PC-9 (cell line): ENCODE measurements at regions of chr19 and their contacts with region 1.

Region 1: DNA sequence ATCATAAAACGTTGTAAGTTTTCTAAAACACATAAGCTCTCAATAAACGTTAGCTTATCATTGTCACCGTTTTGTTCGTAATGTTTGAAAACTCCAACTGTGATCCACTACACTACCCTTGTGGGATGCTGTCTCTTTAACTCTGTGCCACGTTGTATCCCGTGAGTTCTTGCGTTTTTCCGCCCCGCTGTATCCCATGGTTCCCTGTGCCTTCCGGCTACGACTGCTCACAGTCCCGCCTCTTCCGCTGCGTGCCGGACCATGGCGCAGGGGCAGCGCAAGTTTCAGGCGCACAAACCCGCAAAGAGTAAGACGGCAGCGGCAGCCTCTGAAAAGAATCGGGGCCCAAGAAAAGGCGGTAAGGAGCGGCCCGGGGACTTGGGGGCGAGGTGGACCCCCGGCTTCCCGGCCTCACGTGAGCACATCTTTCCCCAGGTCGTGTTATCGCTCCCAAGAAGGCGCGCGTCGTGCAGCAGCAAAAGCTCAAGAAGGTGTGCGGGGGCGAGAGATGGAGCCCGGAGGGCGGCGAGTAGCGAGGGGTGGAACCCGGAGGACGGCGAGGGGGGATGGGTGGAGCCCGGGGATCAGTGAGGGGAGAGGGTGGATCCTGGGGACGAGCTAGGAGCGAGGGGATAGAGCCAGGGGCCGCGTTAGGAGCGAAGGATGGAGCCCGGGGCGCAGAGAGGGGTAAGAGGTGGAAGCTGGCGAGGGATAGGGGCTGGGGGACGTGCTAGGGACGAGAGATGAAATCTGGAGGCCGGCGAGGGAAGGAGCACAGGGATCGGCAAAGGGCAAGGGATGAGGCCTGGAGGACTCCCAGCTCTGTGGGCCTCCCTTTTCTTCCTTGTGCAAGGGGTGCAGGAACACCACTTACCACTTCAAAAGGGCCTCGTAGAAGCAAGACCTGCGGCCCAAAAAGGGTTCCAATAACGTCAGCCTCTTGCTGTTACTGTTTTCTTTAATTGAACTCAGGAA is at the start of gene C19orf53:
- DNase-seq: peak; percentile 82 to 83
- H3K4me3 ChIP-seq: peak within 1 kb of the TSS; percentile 88
- H3K27ac ChIP-seq: peak within 1 kb of the TSS; percentile 44
- H3K4me1 ChIP-seq: peaks cover 6% of the 10 kb centered on the region
- H3K27me3 ChIP-seq: no peaks in the 10 kb centered on the region
- CTCF ChIP-seq: no peak
- total RNA-seq, gene C19orf53: 99.4 and 121 TPM in 2 replicates

Region 2: GRCh38 chr19:13756210-13756609 is 18.3 kb before region 1 on chr19:
- CTCF ChIA-PET with region 1: interaction called, 10 read pairs
- POLR2A ChIA-PET with region 1: no interaction called
- intact Hi-C with region 1: no loop called
- DNase-seq: peak in 1 of 2 experiments; percentile 0
- H3K4me3 ChIP-seq: no peak overlapping the region
- H3K27ac ChIP-seq: no peak overlapping the region
- H3K4me1 ChIP-seq: no peaks in the 10 kb centered on the region
- H3K27me3 ChIP-seq: no peaks in the 10 kb centered on the region
- CTCF ChIP-seq: no peak

Region 3: GRCh38 chr19:13920940-13921761 is 146.6 kb after region 1 on chr19:
- CTCF ChIA-PET with region 1: no interaction called
- POLR2A ChIA-PET with region 1: no interaction called
- intact Hi-C with region 1: no loop called
- DNase-seq: peak in 1 of 2 experiments; percentile 72
- H3K4me3 ChIP-seq: no peak overlapping the region
- H3K27ac ChIP-seq: no peak overlapping the region
- H3K4me1 ChIP-seq: no peaks in the 10 kb centered on the region
- H3K27me3 ChIP-seq: no peaks in the 10 kb centered on the region
- CTCF ChIP-seq: no peak

Region 4: DNA sequence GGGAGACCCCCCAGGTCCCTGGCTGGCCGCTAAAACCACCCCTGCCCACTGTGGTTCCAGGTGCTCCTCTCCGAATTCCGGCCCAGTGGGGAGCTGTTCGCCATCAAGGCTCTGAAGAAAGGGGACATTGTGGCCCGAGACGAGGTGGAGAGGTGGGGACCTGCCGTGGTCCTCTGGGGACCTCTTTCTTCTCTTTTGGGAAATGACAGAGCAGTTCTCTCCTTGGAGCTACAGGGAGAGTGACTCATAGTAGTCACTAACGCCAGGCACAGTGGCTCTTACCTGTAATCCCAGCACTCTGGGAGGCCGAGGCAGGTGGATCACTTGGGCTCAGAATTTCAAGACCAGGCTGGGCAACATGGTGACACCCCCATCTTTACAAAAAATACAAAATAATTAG is 693.3 kb after region 1 on chr19:
- CTCF ChIA-PET with region 1: interaction called, 12 read pairs
- POLR2A ChIA-PET with region 1: no interaction called
- intact Hi-C with region 1: no loop called
- DNase-seq: peak in 1 of 2 experiments; percentile 51
- H3K4me3 ChIP-seq: no peak overlapping the region
- H3K27ac ChIP-seq: no peak overlapping the region
- H3K4me1 ChIP-seq: no peaks in the 10 kb centered on the region
- H3K27me3 ChIP-seq: no peaks in the 10 kb centered on the region
- CTCF ChIP-seq: peak; percentile 47